Activated naive CD4-positive, alpha-beta T cell treated with anti-CD3 and anti-CD28 coated beads for 36 hours (primary cell): ENCODE measurements at regions of chr6 and their contacts with region 1.

Region 1: DNA sequence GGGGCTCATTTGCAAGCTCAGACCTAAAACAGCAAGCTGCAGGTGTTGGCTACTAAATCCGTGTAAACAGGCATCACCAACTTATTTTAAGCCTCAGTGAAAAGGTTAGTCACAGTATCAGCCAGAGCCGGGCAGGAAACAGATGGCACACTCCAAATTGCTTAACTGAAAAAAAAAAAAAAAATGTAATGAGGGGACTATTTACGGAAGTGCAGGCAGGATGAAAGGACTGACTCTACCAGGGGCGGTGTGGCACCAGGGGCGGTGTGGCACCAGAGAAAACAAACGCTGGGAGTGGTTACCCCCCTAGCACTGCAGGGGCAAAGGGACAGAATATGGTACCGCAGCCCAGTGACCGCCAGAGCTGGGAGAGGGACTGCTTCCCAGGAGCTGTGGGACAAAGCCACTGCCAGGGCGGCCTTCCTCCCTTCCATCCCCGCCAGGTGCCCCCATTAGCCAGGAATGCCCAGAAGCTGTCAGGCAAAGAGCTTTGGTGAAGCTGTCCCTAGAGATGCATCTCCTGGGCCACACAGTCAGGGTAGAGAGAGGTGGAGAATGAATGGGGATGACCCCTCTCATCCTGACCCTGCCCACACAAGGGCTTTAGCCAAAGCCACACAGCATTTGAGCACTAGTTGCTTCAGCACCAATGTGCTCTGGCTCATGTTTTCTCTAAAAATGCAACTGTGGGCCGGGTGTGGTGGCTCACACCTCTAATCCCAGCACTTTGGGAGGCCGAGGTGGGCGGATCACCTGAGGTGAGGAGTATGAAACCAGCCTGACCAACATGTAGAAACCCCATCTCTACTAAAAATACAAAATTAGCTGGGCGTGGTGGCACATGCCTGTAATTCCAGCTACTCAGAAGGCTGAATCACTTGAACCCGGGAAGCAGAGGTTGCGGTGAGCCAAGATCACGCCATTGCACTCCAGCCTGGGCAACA is 39.6 kb upstream of the GFOD1 start:
- DNase-seq: peak; percentile 60
- H3K4me3 Mint-ChIP-seq: no peak overlapping the region
- H3K27ac Mint-ChIP-seq: no peak overlapping the region
- H3K4me1 Mint-ChIP-seq: peaks cover 11% of the 10 kb centered on the region
- H3K27me3 Mint-ChIP-seq: no peaks in the 10 kb centered on the region

Region 2: GRCh38 chr6:13487122-13488014 is 39.6 kb before region 1 on chr6 and contains the start of gene GFOD1:
- CTCF ChIA-PET with region 1: no interaction called
- intact Hi-C with region 1: loop called (anchors 2 kb)
- DNase-seq: peak; percentile 80
- H3K4me3 Mint-ChIP-seq: peak within 1 kb of the TSS; percentile 92
- H3K27ac Mint-ChIP-seq: peak within 1 kb of the TSS; percentile 47
- H3K4me1 Mint-ChIP-seq: peaks cover 24% of the 10 kb centered on the region
- H3K27me3 Mint-ChIP-seq: peaks cover 2% of the 10 kb centered on the region
- total RNA-seq, gene GFOD1: 3.7 to 4.2 TPM